IMR-90 (cell line): ENCODE measurements at regions of chr17 and their contacts with region 1.

Region 1: GRCh38 chr17:56592487-56593085 is 913 bp upstream of the NOG start:
- DNase-seq: peak; percentile 39
- ATAC-seq: peak; percentile 53
- H3K4me3 ChIP-seq: peak overlapping the region; percentile 57
- H3K27ac ChIP-seq: no peak overlapping the region
- H3K4me1 ChIP-seq: peaks cover 6% of the 10 kb centered on the region
- H3K27me3 ChIP-seq: peaks cover 31% of the 10 kb centered on the region
- CTCF ChIP-seq: peak; percentile 95
- POLR2A ChIP-seq: 0 out of 2 replicates have a peak, but pooled peaks have one; percentile 45
- RAD21 ChIP-seq: peak; percentile 92

Region 2: DNA sequence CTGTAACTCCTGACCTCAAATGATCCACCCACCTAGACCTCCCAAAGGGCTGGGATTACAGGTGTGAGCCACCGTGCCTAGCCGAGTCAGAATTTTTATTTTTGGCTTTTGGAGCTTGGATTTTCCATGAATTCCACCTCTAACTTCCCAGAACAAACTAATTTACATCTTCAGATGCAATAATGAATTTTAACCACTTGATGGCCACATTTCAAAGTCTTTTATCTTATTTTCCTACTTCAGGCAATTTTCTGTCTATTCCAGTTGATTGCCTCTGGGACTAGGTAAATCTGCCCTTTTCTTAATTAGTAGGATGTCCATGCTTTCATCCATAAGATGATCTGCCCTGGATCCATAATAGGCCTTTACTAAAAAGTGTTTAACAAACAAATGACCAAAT is 595.8 kb before region 1 on chr17:
- CTCF ChIA-PET with region 1: no interaction called
- POLR2A ChIA-PET with region 1: no interaction called
- dilution Hi-C with region 1: no loop called
- in situ Hi-C with region 1: no loop called
- intact Hi-C with region 1: loop called (anchors 5 kb)
- DNase-seq: peak; percentile 4
- ATAC-seq: no peak
- H3K4me3 ChIP-seq: no peak overlapping the region
- H3K27ac ChIP-seq: no peak overlapping the region
- H3K4me1 ChIP-seq: no peaks in the 10 kb centered on the region
- H3K27me3 ChIP-seq: no peaks in the 10 kb centered on the region
- CTCF ChIP-seq: peak; percentile 21; the same call in 1 of the 2 replicates
- POLR2A ChIP-seq: no peak
- RAD21 ChIP-seq: peak; percentile 31; the same call in 1 of the 2 replicates

Region 3: DNA sequence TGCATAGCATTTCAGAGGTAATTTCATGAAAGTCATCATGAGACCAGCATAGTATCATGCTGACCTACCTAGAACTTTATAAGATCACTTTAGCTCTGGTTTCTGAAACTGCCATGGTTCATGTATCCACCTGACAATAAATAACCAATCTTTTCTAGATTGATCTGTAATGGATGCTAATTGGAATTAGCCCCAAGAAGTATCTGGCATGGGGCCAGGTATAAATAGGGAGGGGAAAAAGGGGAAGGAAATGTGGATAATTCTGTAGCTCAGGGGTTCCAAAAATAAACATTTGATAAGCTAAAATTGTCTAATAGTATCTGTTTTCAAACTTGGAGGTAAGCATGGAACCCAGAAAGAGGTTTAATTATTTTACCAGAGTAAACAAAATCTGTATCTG is 185.8 kb before region 1 on chr17:
- CTCF ChIA-PET with region 1: no interaction called
- POLR2A ChIA-PET with region 1: no interaction called
- dilution Hi-C with region 1: no loop called
- in situ Hi-C with region 1: no loop called
- intact Hi-C with region 1: no loop called
- DNase-seq: no peak
- ATAC-seq: no peak
- H3K4me3 ChIP-seq: no peak overlapping the region
- H3K27ac ChIP-seq: no peak overlapping the region
- H3K4me1 ChIP-seq: no peaks in the 10 kb centered on the region
- H3K27me3 ChIP-seq: no peaks in the 10 kb centered on the region
- CTCF ChIP-seq: no peak
- POLR2A ChIP-seq: no peak
- RAD21 ChIP-seq: no peak

Region 4: GRCh38 chr17:56638591-56639051 is 46.0 kb after region 1 on chr17:
- CTCF ChIA-PET with region 1: no interaction called
- POLR2A ChIA-PET with region 1: no interaction called
- dilution Hi-C with region 1: no loop called
- in situ Hi-C with region 1: no loop called
- intact Hi-C with region 1: no loop called
- DNase-seq: no peak
- ATAC-seq: no peak
- H3K4me3 ChIP-seq: no peak overlapping the region
- H3K27ac ChIP-seq: no peak overlapping the region
- H3K4me1 ChIP-seq: no peaks in the 10 kb centered on the region
- H3K27me3 ChIP-seq: peaks cover 24% of the 10 kb centered on the region
- CTCF ChIP-seq: no peak
- POLR2A ChIP-seq: no peak
- RAD21 ChIP-seq: no peak

Region 5: GRCh38 chr17:56658648-56659047 is 66.1 kb after region 1 on chr17:
- CTCF ChIA-PET with region 1: no interaction called
- POLR2A ChIA-PET with region 1: no interaction called
- dilution Hi-C with region 1: no loop called
- in situ Hi-C with region 1: no loop called
- intact Hi-C with region 1: no loop called
- DNase-seq: no peak
- ATAC-seq: no peak
- H3K4me3 ChIP-seq: no peak overlapping the region
- H3K27ac ChIP-seq: no peak overlapping the region
- H3K4me1 ChIP-seq: no peaks in the 10 kb centered on the region
- H3K27me3 ChIP-seq: peaks cover 24% of the 10 kb centered on the region
- CTCF ChIP-seq: no peak
- POLR2A ChIP-seq: no peak
- RAD21 ChIP-seq: no peak

Region 6: GRCh38 chr17:56679115-56679766 is 86.7 kb after region 1 on chr17:
- CTCF ChIA-PET with region 1: no interaction called
- POLR2A ChIA-PET with region 1: interaction called, 7 read pairs
- dilution Hi-C with region 1: no loop called
- in situ Hi-C with region 1: no loop called
- intact Hi-C with region 1: loop called (anchors 1 kb)
- DNase-seq: peak; percentile 56
- ATAC-seq: peak; percentile 65
- H3K4me3 ChIP-seq: no peak overlapping the region
- H3K27ac ChIP-seq: no peak overlapping the region
- H3K4me1 ChIP-seq: peaks cover 6% of the 10 kb centered on the region
- H3K27me3 ChIP-seq: peaks cover 30% of the 10 kb centered on the region
- CTCF ChIP-seq: peak; percentile 58
- POLR2A ChIP-seq: no peak
- RAD21 ChIP-seq: peak; percentile 54

Region 7: GRCh38 chr17:56707312-56708219 is 115.0 kb after region 1 on chr17:
- CTCF ChIA-PET with region 1: interaction called, 3 read pairs
- POLR2A ChIA-PET with region 1: no interaction called
- dilution Hi-C with region 1: no loop called
- in situ Hi-C with region 1: loop called (anchors 5 kb)
- intact Hi-C with region 1: no loop called
- DNase-seq: peak; percentile 65
- ATAC-seq: peak; percentile 77
- H3K4me3 ChIP-seq: no peak overlapping the region
- H3K27ac ChIP-seq: peak overlapping the region; percentile 77
- H3K4me1 ChIP-seq: peaks cover 19% of the 10 kb centered on the region
- H3K27me3 ChIP-seq: no peaks in the 10 kb centered on the region
- CTCF ChIP-seq: no peak
- POLR2A ChIP-seq: no peak
- RAD21 ChIP-seq: no peak

Region 8: GRCh38 chr17:56779898-56780733 is 187.5 kb after region 1 on chr17:
- CTCF ChIA-PET with region 1: interaction called, 17 read pairs
- POLR2A ChIA-PET with region 1: no interaction called
- dilution Hi-C with region 1: no loop called
- in situ Hi-C with region 1: loop called (anchors 10 kb)
- intact Hi-C with region 1: loop called (anchors 1 kb)
- DNase-seq: peak; percentile 66
- ATAC-seq: peak; percentile 97
- H3K4me3 ChIP-seq: peak overlapping the region; percentile 28
- H3K27ac ChIP-seq: peak overlapping the region; percentile 0; the same call in 1 of the 2 replicates
- H3K4me1 ChIP-seq: peaks cover 6% of the 10 kb centered on the region
- H3K27me3 ChIP-seq: no peaks in the 10 kb centered on the region
- CTCF ChIP-seq: peak; percentile 98
- POLR2A ChIP-seq: 0 out of 2 replicates have a peak, but pooled peaks have one; percentile 26
- RAD21 ChIP-seq: peak; percentile 96

Region 9: GRCh38 chr17:56939901-56940343 is 347.3 kb after region 1 on chr17:
- CTCF ChIA-PET with region 1: interaction called, 3 read pairs
- POLR2A ChIA-PET with region 1: no interaction called
- dilution Hi-C with region 1: no loop called
- in situ Hi-C with region 1: loop called (anchors 25 kb)
- intact Hi-C with region 1: loop called (anchors 1 kb)
- DNase-seq: peak; percentile 62
- ATAC-seq: peak; percentile 92
- H3K4me3 ChIP-seq: no peak overlapping the region
- H3K27ac ChIP-seq: no peak overlapping the region
- H3K4me1 ChIP-seq: no peaks in the 10 kb centered on the region
- H3K27me3 ChIP-seq: no peaks in the 10 kb centered on the region
- CTCF ChIP-seq: peak; percentile 73
- POLR2A ChIP-seq: no peak
- RAD21 ChIP-seq: peak; percentile 79